Activated CD4-positive, alpha-beta memory T cell treated with anti-CD3 and anti-CD28 coated beads for 36 hours (primary cell): ENCODE measurements at regions of chr2 and their contacts with region 1.

Region 1: GRCh38 chr2:216034065-216034464 is 20.7 kb upstream of the MREG start:
- DNase-seq: peak; percentile 88
- H3K4me3 Mint-ChIP-seq: no peak overlapping the region
- H3K27ac Mint-ChIP-seq: no peak overlapping the region
- H3K4me1 Mint-ChIP-seq: peaks cover 39% of the 10 kb centered on the region
- H3K27me3 Mint-ChIP-seq: no peaks in the 10 kb centered on the region

Region 2: DNA sequence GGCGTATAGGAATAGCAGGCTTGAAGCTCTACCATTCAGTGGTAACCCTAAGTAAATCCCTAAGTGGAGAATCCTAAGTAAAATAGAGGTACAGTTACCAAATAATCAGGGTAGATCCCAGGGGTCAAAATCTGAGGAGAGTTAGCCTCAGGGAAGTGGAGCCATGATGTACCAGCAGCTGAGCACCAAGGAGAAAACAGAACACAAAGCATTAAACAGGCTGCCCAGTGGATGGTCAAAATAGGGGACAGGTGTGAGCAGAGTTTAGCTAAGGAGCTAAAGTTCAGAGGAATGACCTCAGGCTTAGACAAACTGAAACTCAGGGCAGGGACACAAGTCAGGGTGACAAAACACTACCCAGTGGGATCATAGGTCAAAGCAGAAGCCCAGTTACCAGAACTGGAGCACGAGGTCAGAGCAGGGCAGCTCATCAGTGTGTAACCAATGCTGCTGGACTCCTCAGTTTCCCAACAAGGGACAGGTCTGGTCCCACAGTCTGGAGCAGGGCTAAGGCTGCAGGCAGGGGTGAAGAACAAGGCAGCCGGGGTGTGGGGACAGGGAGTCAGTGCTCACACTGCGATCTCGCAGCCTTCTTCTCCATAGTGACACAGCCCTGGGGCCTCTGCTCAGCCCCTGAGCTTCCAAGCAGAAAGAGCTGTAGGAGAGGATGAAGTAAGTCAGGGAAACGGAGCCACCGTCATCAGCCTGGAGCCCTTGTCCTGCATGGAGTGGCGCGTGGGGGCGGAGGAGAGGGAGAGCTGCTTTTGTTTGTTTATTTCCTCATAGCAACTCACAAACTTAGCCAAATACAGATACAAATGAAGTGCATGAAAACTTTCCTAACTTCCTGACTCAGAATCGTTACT is 284.7 kb before region 1 on chr2:
- CTCF ChIA-PET with region 1: no interaction called
- POLR2A ChIA-PET with region 1: no interaction called
- intact Hi-C with region 1: loop called (anchors 5 kb)
- DNase-seq: no peak
- H3K4me3 Mint-ChIP-seq: no peak overlapping the region
- H3K27ac Mint-ChIP-seq: no peak overlapping the region
- H3K4me1 Mint-ChIP-seq: peaks cover 61% of the 10 kb centered on the region
- H3K27me3 Mint-ChIP-seq: no peaks in the 10 kb centered on the region

Region 3: DNA sequence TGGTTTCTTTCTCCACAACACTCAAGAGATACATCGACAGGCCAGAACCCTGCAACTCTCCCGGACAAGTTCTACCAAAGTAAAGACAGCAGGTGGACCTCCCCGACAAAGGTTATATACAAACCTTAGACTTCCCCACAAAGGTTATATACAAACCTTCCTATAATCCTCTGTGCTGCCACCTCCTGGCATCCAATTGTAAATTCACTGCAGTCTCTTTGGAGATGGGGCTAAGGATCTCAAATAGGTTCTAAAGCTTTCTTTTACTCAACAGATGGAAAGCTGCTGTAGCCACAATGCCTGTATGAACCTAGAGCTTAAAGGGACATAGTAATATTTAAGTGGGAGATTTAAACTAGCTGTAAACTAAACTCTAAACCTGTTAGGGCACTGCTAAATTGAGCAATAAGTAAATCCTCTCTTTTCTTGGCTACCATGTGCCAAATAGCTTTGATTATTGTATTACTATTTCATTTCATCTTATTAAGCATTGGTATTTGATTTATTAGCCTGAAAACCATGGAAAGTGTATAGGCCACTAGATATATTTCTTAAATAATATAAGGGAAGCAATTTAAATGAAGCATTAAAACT is 10.9 kb before region 1 on chr2:
- CTCF ChIA-PET with region 1: interaction called, 27 read pairs
- POLR2A ChIA-PET with region 1: no interaction called
- intact Hi-C with region 1: no loop called
- DNase-seq: peak; percentile 62
- H3K4me3 Mint-ChIP-seq: no peak overlapping the region
- H3K27ac Mint-ChIP-seq: no peak overlapping the region
- H3K4me1 Mint-ChIP-seq: peaks cover 7% of the 10 kb centered on the region
- H3K27me3 Mint-ChIP-seq: no peaks in the 10 kb centered on the region

Region 4: GRCh38 chr2:216081487-216082116 is 47.5 kb after region 1 on chr2 and contains the starts of genes PECR and TMEM169:
- CTCF ChIA-PET with region 1: interaction called, 24 read pairs
- POLR2A ChIA-PET with region 1: no interaction called
- intact Hi-C with region 1: loop called (anchors 2 kb)
- DNase-seq: peak; percentile 87
- H3K4me3 Mint-ChIP-seq: peak within 1 kb of the TSS; percentile 96
- H3K27ac Mint-ChIP-seq: peak within 1 kb of the TSS; percentile 81
- H3K4me1 Mint-ChIP-seq: peaks cover 51% of the 10 kb centered on the region
- H3K27me3 Mint-ChIP-seq: no peaks in the 10 kb centered on the region
- total RNA-seq, gene PECR: 23.3 to 27.6 TPM
- total RNA-seq, gene TMEM169: 2.0 to 2.7 TPM

Region 5: DNA sequence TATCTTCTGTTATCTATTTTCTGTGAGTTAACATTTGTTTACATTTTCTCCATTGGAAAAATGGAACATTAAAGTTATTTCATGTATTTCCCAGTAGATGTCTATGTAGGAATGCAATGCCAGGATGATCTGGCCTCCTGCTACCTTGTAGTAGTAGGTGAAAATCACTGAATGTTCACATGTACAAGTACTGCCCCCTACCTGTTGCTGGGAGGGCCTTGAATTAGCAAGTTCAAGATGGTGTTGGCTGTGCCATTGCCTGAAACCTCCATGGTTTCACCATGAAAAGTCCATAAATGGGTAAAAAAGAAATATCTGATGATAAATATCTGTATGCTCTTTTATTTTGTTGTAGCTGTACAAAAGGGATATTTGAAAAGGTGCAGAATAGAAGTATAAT is 105.8 kb after region 1 on chr2:
- CTCF ChIA-PET with region 1: interaction called, 15 read pairs
- POLR2A ChIA-PET with region 1: no interaction called
- intact Hi-C with region 1: loop called (anchors 1 kb)
- DNase-seq: peak; percentile 43
- H3K4me3 Mint-ChIP-seq: no peak overlapping the region
- H3K27ac Mint-ChIP-seq: no peak overlapping the region
- H3K4me1 Mint-ChIP-seq: peaks cover 23% of the 10 kb centered on the region
- H3K27me3 Mint-ChIP-seq: no peaks in the 10 kb centered on the region

Region 6: GRCh38 chr2:216163518-216163917 is 129.5 kb after region 1 on chr2:
- CTCF ChIA-PET with region 1: no interaction called
- POLR2A ChIA-PET with region 1: no interaction called
- intact Hi-C with region 1: no loop called
- DNase-seq: no peak
- H3K4me3 Mint-ChIP-seq: no peak overlapping the region
- H3K27ac Mint-ChIP-seq: no peak overlapping the region
- H3K4me1 Mint-ChIP-seq: peaks cover 16% of the 10 kb centered on the region
- H3K27me3 Mint-ChIP-seq: no peaks in the 10 kb centered on the region

Region 7: DNA sequence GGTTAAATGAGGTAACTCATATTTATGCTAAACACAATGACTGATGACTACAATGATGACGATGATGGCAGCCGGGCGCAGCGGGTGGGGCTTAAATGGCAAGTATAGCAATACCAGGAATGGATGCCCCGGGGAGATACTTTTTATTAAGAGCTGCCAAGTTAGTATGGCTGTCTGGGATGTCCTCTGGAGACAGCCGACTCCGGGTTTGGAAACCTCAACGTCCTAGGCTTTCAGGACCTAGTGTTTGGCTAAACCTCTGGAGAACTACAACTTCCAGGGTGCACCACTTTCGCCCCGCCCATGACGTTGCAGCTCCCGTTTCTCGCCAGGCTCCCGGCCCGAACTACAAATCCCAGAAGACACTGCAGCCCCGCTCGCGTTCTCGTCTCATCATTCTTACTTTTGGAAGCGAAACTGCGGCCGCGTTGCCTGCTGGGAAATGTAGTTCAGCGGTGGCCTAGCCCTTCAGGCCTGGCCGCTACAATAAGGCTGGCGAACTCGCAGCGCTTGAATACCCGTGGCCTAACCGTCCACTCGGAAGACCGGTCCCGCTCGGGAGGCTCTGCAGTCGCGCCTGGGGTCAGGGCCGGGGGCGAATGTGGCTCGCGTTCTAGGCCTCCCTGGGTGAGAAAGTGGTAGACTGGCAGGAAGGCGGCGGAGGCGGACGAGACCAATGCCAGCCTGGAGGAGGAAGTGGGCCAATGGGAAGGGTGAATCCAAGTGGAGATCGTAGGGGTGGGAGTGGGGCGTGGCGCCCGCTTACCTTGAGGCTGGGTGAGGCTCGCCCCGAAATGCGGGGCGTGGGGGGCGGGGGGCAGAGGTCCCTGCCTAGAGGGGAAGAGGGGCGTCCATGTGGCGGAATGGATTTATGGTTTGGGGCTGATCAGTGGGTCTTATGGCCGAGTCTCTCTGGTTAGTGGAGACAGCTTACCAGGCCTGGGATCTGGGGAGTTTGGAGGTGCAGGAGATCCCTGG is 378.2 kb after region 1 on chr2 and contains the start of gene SMARCAL1:
- CTCF ChIA-PET with region 1: interaction called, 3 read pairs
- POLR2A ChIA-PET with region 1: no interaction called
- intact Hi-C with region 1: loop called (anchors 5 kb)
- DNase-seq: peak; percentile 99
- H3K4me3 Mint-ChIP-seq: peak within 1 kb of the TSS; percentile 95
- H3K27ac Mint-ChIP-seq: peak within 1 kb of the TSS; percentile 94
- H3K4me1 Mint-ChIP-seq: peaks cover 8% of the 10 kb centered on the region
- H3K27me3 Mint-ChIP-seq: peaks cover 2% of the 10 kb centered on the region
- total RNA-seq, gene SMARCAL1: 20.8 to 25.2 TPM

Region 8: DNA sequence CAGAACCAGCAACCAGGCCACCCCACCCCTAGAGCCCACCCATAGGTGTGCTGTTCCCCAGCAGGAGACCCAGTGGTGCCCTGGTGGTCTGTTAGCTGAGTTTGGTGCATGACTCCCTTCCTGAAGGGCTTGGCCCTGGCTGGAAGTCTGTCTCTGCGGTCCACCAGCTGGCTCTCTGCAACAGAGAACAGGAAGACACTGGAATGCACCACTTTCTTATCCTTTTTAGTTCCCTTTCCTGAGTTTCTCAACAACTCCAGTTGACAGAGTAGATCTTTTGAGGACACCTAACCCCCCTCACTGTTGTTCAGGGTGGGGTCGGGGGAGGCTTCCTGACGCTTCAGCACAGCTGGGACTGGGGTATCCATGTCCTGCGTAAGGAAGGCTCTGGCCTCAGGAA is 452.6 kb after region 1 on chr2:
- CTCF ChIA-PET with region 1: no interaction called
- POLR2A ChIA-PET with region 1: no interaction called
- intact Hi-C with region 1: no loop called
- DNase-seq: no peak
- H3K4me3 Mint-ChIP-seq: no peak overlapping the region
- H3K27ac Mint-ChIP-seq: no peak overlapping the region
- H3K4me1 Mint-ChIP-seq: no peaks in the 10 kb centered on the region
- H3K27me3 Mint-ChIP-seq: no peaks in the 10 kb centered on the region